Transverse colon (tissue), 4 donors: ENCODE measurements at regions of chr13 and their contacts with region 1.

Region 1: DNA sequence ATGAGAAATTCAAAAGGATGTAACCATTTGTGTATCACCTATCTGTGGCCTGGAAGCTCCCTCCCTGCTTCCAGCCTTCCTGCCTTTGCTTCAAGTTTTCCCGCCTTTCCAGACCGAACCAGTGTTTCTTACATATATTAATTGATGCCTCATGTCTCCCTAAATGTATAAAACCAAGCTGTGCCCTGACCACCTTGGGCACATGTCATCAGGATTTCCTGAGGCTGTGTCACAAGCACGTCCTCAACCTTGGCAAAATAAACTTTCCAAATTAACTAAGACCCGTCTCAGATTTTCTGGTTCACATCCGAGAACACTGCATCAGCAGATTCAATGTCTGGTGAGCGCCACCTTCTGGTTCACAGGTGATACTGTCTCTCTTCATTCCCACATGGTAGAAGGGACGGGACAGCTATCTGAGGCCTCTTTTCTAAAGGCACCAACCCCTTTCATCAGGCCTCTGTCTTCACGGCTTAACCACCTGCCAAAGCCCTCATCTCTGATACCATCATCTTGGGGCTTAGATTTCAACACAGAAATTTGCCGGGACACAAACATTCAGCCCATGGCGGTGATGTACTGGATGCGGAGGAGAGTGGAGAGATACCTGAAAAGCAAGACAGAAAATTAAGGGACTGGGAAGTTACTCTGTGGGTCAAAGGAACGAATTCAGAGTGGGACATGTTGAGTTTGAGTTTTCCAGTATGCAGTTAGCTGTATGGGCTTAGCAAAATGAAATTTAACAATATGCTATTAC is 58.7 kb upstream of the PABPC3 start:
- DNase-seq: peak; percentile 47
- H3K4me3 ChIP-seq: no peak overlapping the region
- H3K27ac ChIP-seq: no peak overlapping the region
- H3K4me1 ChIP-seq: no peaks in the 10 kb centered on the region
- H3K27me3 ChIP-seq: peaks cover 54% of the 10 kb centered on the region
- CTCF ChIP-seq: peak; percentile 73 to 81 (median 74)
- EP300 ChIP-seq: no peak
- POLR2A ChIP-seq: no peak

Region 2: DNA sequence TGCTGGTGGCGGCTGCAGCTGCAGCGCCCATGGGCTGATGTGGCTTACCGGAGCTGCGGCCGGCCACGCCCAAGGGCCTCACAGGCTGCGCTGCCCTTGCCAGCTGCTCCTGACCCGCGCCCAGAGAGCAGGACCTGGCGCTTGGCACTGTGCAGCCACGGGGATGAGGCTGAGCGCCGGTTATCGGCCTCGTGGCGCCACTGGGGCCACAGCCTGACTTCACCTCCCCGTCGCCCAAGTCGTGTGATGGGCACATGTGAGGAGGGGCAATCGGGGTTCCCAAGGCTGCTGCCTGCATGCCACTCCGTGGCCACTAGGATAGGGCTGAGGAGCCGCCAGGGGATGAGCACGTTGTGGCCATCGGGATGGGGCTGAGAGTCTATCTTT is 18.5 kb before region 1 on chr13:
- in situ Hi-C with region 1: no loop called
- intact Hi-C with region 1: loop called (anchors 1 kb)
- DNase-seq: peak; percentile 19
- H3K4me3 ChIP-seq: peak overlapping the region in 2 of 4 donors; percentile 29 to 46
- H3K27ac ChIP-seq: no peak overlapping the region
- H3K4me1 ChIP-seq: peaks cover 0 to 15% (median 8%) of the 10 kb centered on the region in 4 donors
- H3K27me3 ChIP-seq: peaks cover 51% of the 10 kb centered on the region
- CTCF ChIP-seq: no peak
- EP300 ChIP-seq: no peak
- POLR2A ChIP-seq: no peak

Region 3: DNA sequence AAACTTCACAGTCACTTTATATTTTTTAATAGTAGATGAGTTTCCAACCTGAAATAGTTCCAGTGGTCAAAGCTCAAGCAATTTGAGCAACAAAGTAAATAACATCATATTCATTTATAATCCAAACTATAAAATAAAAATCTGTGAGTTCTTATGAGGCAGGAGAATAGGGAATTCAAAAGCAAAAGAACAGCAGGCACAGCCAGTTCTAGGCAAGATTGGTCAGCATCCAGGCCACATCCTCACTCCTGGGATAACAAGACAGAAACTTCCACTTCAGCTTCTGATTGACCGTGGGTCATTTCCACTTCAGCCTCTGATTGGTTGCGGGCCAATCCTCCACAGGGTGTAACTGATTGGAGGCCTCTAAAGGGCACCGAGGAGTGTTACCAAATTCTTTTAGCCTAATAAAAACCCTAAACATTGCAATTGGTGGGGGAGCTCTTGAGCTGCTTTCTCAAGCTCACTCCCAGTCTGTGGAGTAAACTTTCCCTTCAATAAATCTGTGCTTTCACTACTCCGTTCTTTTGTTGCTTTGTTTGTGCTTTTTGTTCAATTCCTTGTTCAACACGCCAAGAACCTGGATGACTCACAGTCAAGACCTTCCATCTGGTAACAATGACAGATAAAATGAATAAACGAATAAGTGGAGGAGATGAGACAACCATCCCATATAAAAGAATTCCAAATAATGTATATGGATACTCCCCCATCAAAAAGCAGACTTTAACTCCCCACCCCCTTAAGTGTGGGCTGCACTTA is 177.4 kb after region 1 on chr13:
- in situ Hi-C with region 1: no loop called
- intact Hi-C with region 1: no loop called
- DNase-seq: no peak
- H3K4me3 ChIP-seq: no peak overlapping the region
- H3K27ac ChIP-seq: no peak overlapping the region
- H3K4me1 ChIP-seq: no peaks in the 10 kb centered on the region
- H3K27me3 ChIP-seq: no peaks in the 10 kb centered on the region
- CTCF ChIP-seq: no peak
- EP300 ChIP-seq: no peak
- POLR2A ChIP-seq: no peak